MCF 10A (cell line): ENCODE measurements at regions of chr5 and their contacts with region 1.

Region 1: GRCh38 chr5:179355976-179356974 is 11.0 kb upstream of the ADAMTS2 start:
- DNase-seq: peak; percentile 76
- H3K4me3 Mint-ChIP-seq: peak overlapping the region; percentile 64
- H3K27ac Mint-ChIP-seq: peak overlapping the region; percentile 99
- H3K4me1 Mint-ChIP-seq: peaks cover 56% of the 10 kb centered on the region
- H3K27me3 Mint-ChIP-seq: no peaks in the 10 kb centered on the region
- CTCF ChIP-seq: no peak

Region 2: GRCh38 chr5:179227229-179227579 is 129.1 kb before region 1 on chr5:
- CTCF ChIA-PET with region 1: no interaction called
- POLR2A ChIA-PET with region 1: no interaction called
- intact Hi-C with region 1: no loop called
- DNase-seq: no peak
- H3K4me3 Mint-ChIP-seq: no peak overlapping the region
- H3K27ac Mint-ChIP-seq: no peak overlapping the region
- H3K4me1 Mint-ChIP-seq: no peaks in the 10 kb centered on the region
- H3K27me3 Mint-ChIP-seq: peaks cover 6% of the 10 kb centered on the region
- CTCF ChIP-seq: no peak

Region 3: GRCh38 chr5:179304466-179304865 is 51.8 kb before region 1 on chr5:
- CTCF ChIA-PET with region 1: no interaction called
- POLR2A ChIA-PET with region 1: no interaction called
- intact Hi-C with region 1: loop called (anchors 2 kb)
- DNase-seq: peak; percentile 65
- H3K4me3 Mint-ChIP-seq: peak overlapping the region; percentile 1
- H3K27ac Mint-ChIP-seq: peak overlapping the region; percentile 68
- H3K4me1 Mint-ChIP-seq: peaks cover 33% of the 10 kb centered on the region
- H3K27me3 Mint-ChIP-seq: no peaks in the 10 kb centered on the region
- CTCF ChIP-seq: no peak

Region 4: GRCh38 chr5:179393078-179393477 is 36.8 kb after region 1 on chr5:
- CTCF ChIA-PET with region 1: interaction called, 13 read pairs
- POLR2A ChIA-PET with region 1: interaction called, 4 read pairs
- intact Hi-C with region 1: loop called (anchors 1 kb)
- DNase-seq: peak; percentile 88
- H3K4me3 Mint-ChIP-seq: peak overlapping the region; percentile 39
- H3K27ac Mint-ChIP-seq: peak overlapping the region; percentile 95
- H3K4me1 Mint-ChIP-seq: peaks cover 14% of the 10 kb centered on the region
- H3K27me3 Mint-ChIP-seq: no peaks in the 10 kb centered on the region
- CTCF ChIP-seq: no peak

Region 5: GRCh38 chr5:179495906-179496455 is 139.7 kb after region 1 on chr5:
- CTCF ChIA-PET with region 1: interaction called, 6 read pairs
- POLR2A ChIA-PET with region 1: no interaction called
- intact Hi-C with region 1: loop called (anchors 10 kb)
- DNase-seq: peak; percentile 39
- H3K4me3 Mint-ChIP-seq: no peak overlapping the region
- H3K27ac Mint-ChIP-seq: no peak overlapping the region
- H3K4me1 Mint-ChIP-seq: no peaks in the 10 kb centered on the region
- H3K27me3 Mint-ChIP-seq: no peaks in the 10 kb centered on the region
- CTCF ChIP-seq: peak; percentile 21

Region 6: GRCh38 chr5:180187767-180188166 is 831.5 kb after region 1 on chr5:
- CTCF ChIA-PET with region 1: no interaction called
- POLR2A ChIA-PET with region 1: no interaction called
- intact Hi-C with region 1: no loop called
- DNase-seq: no peak
- H3K4me3 Mint-ChIP-seq: no peak overlapping the region
- H3K27ac Mint-ChIP-seq: no peak overlapping the region
- H3K4me1 Mint-ChIP-seq: no peaks in the 10 kb centered on the region
- H3K27me3 Mint-ChIP-seq: no peaks in the 10 kb centered on the region
- CTCF ChIP-seq: no peak